ENCODE measurements at regions of chr5 and their contacts with region 1.

Region 1: DNA sequence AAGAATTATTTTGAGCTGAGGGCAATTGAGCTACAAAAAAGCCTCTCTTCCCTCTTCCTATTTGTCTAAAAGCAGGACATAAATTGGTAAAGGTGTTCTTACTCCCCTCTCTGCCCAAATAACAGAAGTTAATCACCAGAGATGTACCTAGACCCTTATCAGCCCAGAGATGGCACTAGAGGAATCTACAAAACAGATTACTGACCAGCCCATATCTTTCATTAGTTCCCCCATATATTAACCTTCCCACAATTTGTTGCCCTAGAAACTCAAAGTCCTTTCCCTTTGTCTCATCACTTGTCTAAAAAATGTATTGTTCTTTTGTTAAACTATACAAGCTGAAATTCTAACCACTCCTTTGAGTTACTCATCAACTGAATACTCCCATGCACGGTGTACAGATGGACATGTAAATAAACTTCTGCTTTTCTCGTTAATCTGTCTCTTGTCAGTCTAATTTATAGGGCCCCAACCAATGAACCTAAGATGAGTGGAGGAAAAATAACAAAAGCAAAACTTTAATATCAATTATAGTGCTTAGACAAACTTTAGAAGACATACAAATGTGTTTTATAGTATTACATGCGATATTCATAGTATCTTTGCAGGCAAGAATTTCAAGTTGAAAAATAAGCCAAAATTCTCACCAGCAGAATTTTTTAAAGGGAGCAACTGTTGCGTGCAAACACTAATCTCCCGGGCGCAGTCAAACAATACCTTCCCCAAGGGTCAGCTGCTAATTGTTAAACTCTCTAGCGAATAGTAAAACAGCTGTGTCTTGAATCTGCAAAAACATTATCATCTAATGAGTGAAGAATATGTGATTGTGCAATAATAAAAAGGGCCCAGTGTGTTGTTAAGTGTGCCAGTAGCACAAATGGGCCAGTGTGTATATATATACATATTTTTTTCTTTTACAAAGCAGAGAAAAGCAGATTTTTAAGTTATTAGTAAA is 131.1 kb downstream of the CCDC192 start:
- DNase-seq: peak; percentile 68
- ATAC-seq: peak; percentile 93
- H3K4me3 ChIP-seq: no peak overlapping the region
- H3K27ac ChIP-seq: peak overlapping the region; percentile 32
- H3K4me1 ChIP-seq: peaks cover 25% of the 10 kb centered on the region
- H3K27me3 ChIP-seq: no peaks in the 10 kb centered on the region
- CTCF ChIP-seq: no peak; the same call in 1 of the 2 replicates

Region 2: GRCh38 chr5:127785098-127785927 is 49.0 kb before region 1 on chr5:
- CTCF ChIA-PET with region 1: no interaction called
- POLR2A ChIA-PET with region 1: no interaction called
- intact Hi-C with region 1: loop called (anchors 1 kb)
- DNase-seq: peak; percentile 95
- ATAC-seq: peak; percentile 99
- H3K4me3 ChIP-seq: no peak overlapping the region
- H3K27ac ChIP-seq: no peak overlapping the region
- H3K4me1 ChIP-seq: peaks cover 14% of the 10 kb centered on the region
- H3K27me3 ChIP-seq: no peaks in the 10 kb centered on the region
- CTCF ChIP-seq: no peak

Region 3: GRCh38 chr5:127813633-127814587 is 20.4 kb before region 1 on chr5:
- CTCF ChIA-PET with region 1: no interaction called
- POLR2A ChIA-PET with region 1: no interaction called
- intact Hi-C with region 1: loop called (anchors 1 kb)
- DNase-seq: peak; percentile 83
- ATAC-seq: peak; percentile 90
- H3K4me3 ChIP-seq: peak overlapping the region; percentile 17; the same call in 1 of the 2 replicates
- H3K27ac ChIP-seq: peak overlapping the region; percentile 73
- H3K4me1 ChIP-seq: peaks cover 36% of the 10 kb centered on the region
- H3K27me3 ChIP-seq: no peaks in the 10 kb centered on the region
- CTCF ChIP-seq: no peak

Region 4: DNA sequence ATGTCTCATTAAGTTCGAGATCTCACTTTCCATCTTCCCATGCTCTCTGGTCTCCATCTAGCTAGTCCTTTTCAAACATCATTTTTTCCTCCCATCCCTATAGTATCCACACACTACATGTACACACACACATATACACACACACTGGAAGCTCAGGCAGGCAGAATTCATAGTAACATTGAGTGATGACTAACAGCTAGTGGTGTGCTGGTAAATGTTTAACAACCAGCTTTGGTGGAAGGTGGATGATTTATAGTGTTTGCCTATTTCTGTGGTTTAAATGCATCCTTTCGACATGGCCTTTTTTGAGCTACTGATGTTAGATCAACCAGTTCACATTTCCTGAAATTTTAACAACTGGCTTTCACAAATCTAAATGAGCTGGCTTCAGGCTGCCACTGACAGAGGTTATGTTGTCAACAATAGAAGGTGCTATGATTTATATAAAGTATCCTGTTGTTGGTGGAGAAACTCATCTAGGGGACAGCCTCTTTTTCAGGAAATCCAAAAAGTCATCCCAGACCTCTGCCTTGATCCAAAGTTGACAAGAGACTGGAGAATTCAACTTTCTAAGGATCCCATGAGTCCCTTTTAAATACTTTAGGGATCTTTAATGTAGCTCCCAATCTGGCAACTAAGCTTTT is 13.2 kb before region 1 on chr5:
- CTCF ChIA-PET with region 1: interaction called, 4 read pairs
- POLR2A ChIA-PET with region 1: interaction called, 3 read pairs
- intact Hi-C with region 1: loop called (anchors 2 kb)
- DNase-seq: peak; percentile 92
- ATAC-seq: peak; percentile 98
- H3K4me3 ChIP-seq: no peak overlapping the region
- H3K27ac ChIP-seq: peak overlapping the region; percentile 32
- H3K4me1 ChIP-seq: peaks cover 11% of the 10 kb centered on the region
- H3K27me3 ChIP-seq: no peaks in the 10 kb centered on the region
- CTCF ChIP-seq: no peak

Region 5: GRCh38 chr5:127863610-127864395 is 29.5 kb after region 1 on chr5:
- CTCF ChIA-PET with region 1: no interaction called
- POLR2A ChIA-PET with region 1: no interaction called
- intact Hi-C with region 1: loop called (anchors 1 kb)
- DNase-seq: peak; percentile 67
- ATAC-seq: peak; percentile 70
- H3K4me3 ChIP-seq: no peak overlapping the region
- H3K27ac ChIP-seq: peak overlapping the region; percentile 68
- H3K4me1 ChIP-seq: peaks cover 18% of the 10 kb centered on the region
- H3K27me3 ChIP-seq: no peaks in the 10 kb centered on the region
- CTCF ChIP-seq: no peak

Region 6: DNA sequence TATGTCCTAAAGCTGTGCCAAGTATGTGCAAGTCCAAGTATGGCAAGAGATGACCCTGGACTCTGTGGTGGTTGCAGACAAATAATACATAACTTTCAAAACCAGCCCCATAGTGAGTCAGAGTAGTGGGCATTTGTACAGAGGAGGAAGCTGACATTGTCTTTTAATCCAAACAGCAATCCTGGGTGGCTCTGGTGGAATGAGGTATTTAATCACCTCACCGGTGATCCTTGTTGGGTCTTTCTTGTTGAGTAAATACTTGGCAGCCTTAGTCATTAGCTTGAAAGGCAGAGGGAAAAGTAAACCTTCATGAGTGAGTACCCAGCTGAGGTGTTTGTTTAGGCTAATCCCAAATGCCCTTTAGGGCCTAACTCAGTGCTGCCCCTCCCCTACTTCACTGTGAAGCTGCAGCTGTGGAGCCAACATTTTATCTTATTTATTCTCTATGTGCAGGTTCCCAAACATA is 100.5 kb after region 1 on chr5:
- CTCF ChIA-PET with region 1: no interaction called
- POLR2A ChIA-PET with region 1: no interaction called
- intact Hi-C with region 1: loop called (anchors 1 kb)
- DNase-seq: peak; percentile 99
- ATAC-seq: peak; percentile 94
- H3K4me3 ChIP-seq: no peak overlapping the region
- H3K27ac ChIP-seq: peak overlapping the region; percentile 89
- H3K4me1 ChIP-seq: peaks cover 41% of the 10 kb centered on the region
- H3K27me3 ChIP-seq: no peaks in the 10 kb centered on the region
- CTCF ChIP-seq: peak; percentile 60

Region 7: DNA sequence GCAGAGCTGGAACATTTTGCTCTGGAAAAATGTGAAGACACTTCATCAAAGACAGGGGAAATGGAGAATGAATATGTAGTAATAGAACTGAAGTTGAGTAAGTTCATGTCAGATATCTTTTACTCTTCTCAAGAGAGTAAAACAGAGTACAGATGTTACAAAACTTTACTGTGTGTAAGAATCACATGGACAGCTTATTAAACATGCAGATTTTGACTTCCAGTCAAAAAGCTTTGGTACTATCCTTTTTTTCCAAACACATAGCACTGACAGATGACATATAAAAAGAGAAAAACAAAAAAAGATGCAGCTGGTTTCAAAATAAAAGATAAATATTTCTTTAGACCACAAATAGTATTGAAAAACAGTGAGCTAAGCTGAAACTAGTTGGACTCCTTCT is 588.3 kb after region 1 on chr5:
- CTCF ChIA-PET with region 1: no interaction called
- POLR2A ChIA-PET with region 1: no interaction called
- intact Hi-C with region 1: no loop called
- DNase-seq: no peak
- ATAC-seq: no peak
- H3K4me3 ChIP-seq: no peak overlapping the region
- H3K27ac ChIP-seq: no peak overlapping the region
- H3K4me1 ChIP-seq: no peaks in the 10 kb centered on the region
- H3K27me3 ChIP-seq: no peaks in the 10 kb centered on the region
- CTCF ChIP-seq: no peak